ENCODE measurements at regions of chr3 and their contacts with region 1.

Region 1: GRCh38 chr3:192816351-192816750 is 89.0 kb upstream of the FGF12 start:
- DNase-seq: no peak
- H3K4me3 ChIP-seq: no peak overlapping the region
- H3K27ac ChIP-seq: no peak overlapping the region
- H3K4me1 ChIP-seq: peaks cover 0 to 9% of the 10 kb centered on the region in 2 donors
- H3K27me3 ChIP-seq: no peaks in the 10 kb centered on the region
- CTCF ChIP-seq: peak; percentile 63 to 75 (median 66)

Region 2: DNA sequence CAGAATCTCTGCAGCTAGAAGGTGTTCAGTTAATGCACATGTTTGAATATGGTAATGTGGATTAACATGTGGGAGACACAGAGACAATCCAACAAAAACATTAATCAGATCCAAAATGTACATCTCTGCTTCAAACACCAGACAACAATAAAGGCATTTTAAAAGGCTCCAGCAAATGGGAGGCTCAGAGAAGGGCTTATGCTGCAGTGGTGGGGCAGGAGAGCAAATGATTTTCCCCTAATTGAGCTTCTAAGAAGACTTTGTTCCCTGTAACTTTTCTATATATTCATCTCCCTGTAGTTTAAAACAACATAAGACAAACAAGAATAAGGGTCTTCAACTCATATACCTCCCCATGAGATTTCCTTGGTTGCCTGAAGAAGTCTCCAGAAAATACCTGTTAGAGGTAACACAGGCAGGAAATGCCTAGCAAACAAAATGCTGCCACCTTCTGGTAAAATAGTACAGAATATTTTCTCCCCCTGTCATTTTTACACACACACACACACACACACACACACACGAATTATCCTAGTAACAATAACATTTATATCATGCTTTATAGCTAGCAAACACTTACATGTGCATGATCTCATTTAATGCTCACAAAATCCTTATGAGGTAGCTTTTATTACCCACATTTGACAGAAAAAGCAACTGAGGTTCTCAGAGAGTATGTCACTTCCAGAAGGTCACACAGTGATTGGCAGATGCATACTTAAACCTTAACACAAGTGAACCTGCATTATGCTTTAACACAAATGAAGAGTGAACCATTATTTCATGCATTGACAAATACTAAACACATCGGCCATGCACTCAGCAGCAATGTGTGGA is 224.7 kb after region 1 on chr3:
- intact Hi-C with region 1: loop called (anchors 1 kb)
- DNase-seq: no peak
- H3K4me3 ChIP-seq: no peak overlapping the region
- H3K27ac ChIP-seq: no peak overlapping the region
- H3K4me1 ChIP-seq: no peaks in the 10 kb centered on the region
- H3K27me3 ChIP-seq: no peaks in the 10 kb centered on the region
- CTCF ChIP-seq: peak; percentile 37 to 60 (median 38)

Region 3: DNA sequence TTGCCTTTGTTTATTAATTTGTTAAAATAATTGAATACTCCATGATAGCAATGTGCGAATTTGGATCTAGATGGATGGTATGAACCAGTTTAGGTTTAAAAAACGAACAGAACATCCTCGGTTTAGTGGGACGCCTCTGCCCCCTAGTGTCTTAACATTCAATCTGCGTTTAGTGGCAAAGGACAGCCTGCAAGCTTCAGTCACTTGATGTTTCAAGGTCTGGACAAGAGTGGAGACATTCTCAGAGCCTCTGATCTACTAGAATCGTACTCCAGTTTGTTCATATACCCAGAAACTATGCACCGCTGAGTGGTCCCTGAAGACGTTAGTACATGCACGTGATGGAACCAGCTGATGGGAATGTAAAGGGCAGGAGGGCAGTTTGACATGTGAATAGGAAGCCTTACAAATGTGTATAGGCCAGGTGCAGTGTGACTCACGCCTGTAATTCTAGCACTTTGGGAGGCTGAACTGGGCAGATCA is 756.1 kb after region 1 on chr3:
- intact Hi-C with region 1: loop called (anchors 2 kb)
- DNase-seq: no peak
- H3K4me3 ChIP-seq: no peak overlapping the region
- H3K27ac ChIP-seq: no peak overlapping the region
- H3K4me1 ChIP-seq: no peaks in the 10 kb centered on the region
- H3K27me3 ChIP-seq: no peaks in the 10 kb centered on the region
- CTCF ChIP-seq: peak; percentile 25 to 64 (median 61)